ENCODE measurements at regions of chr20 and their contacts with region 1.

Region 1: DNA sequence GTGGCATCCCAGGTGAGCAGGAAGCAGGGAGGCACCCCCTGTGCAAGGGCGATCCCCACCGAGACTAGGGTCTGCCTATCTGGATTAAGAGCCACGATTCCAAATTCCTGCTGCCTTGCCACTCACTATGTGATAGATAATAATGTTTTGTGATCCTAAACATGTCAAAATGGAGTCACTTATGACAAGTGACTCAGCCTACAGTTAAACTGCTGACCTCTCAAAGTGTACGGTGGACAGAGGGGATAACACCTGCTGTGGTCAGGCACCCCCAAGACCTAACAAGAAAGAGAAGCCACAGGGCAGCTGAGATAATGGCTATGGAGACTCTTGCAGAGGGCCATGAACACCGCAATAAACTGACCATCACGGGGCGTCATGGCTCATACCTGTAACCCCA is 16.0 kb upstream of the SNTA1 start:
- DNase-seq: no peak
- H3K4me3 ChIP-seq: no peak overlapping the region
- H3K27ac ChIP-seq: no peak overlapping the region
- H3K4me1 ChIP-seq: no peaks in the 10 kb centered on the region
- H3K27me3 ChIP-seq: no peaks in the 10 kb centered on the region
- CTCF ChIP-seq: no peak
- POLR2A ChIP-seq: no peak

Region 2: DNA sequence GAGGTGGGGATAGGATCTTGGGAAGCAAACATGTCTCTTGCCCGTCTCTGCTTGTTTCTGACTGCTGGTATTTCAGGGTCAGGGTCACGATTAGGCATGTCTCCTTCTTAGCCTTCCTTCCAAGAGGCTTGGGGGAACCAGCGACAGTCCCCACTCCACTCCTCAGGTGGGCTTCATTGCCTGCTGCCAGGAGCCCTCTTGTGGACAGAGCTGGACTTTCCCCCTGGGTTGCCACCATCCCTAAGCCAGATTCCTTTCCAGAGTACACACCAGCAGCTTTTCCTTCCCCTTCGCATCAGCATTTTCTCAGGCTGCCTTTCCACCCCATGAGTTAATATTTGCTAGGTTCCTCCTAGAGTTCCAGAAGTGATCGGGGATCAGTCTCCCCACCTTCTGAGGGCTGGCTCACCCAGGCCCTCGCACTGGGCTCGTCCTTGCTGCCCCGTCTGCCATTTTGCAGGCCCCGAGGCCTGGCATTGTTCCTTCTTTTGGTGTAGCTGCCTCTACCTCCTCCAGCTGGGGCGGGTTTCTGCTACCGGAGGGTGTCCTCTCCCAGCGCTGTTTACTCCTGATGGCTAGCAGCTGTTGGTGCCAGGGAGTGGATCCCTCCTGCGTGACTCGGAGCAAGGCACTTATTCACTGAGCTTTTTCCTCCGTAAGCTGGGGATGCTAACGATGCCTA is 193.8 kb after region 1 on chr20:
- intact Hi-C with region 1: loop called (anchors 5 kb)
- DNase-seq: no peak
- H3K4me3 ChIP-seq: no peak overlapping the region
- H3K27ac ChIP-seq: peak overlapping the region; percentile 68 to 87
- H3K4me1 ChIP-seq: peaks cover 33% of the 10 kb centered on the region
- H3K27me3 ChIP-seq: no peaks in the 10 kb centered on the region
- CTCF ChIP-seq: peak; percentile 55 to 83 (median 76)
- POLR2A ChIP-seq: no peak

Region 3: GRCh38 chr20:33666293-33667244 is 207.0 kb after region 1 on chr20 and contains the start of gene ACTL10:
- intact Hi-C with region 1: loop called (anchors 5 kb)
- DNase-seq: peak; percentile 96
- H3K4me3 ChIP-seq: peak within 1 kb of the TSS; percentile 51 to 53
- H3K27ac ChIP-seq: peak within 1 kb of the TSS; percentile 90 to 91
- H3K4me1 ChIP-seq: peaks cover 7% of the 10 kb centered on the region
- H3K27me3 ChIP-seq: no peaks in the 10 kb centered on the region
- CTCF ChIP-seq: peak in 2 of 4 experiments; percentile 43 to 50
- POLR2A ChIP-seq: peak; percentile 96
- total RNA-seq, gene ACTL10: 7.9 to 8.5 TPM

Region 4: GRCh38 chr20:33908336-33908735 is 448.7 kb after region 1 on chr20:
- intact Hi-C with region 1: no loop called
- DNase-seq: no peak
- H3K4me3 ChIP-seq: no peak overlapping the region
- H3K27ac ChIP-seq: no peak overlapping the region
- H3K4me1 ChIP-seq: peaks cover 10% of the 10 kb centered on the region
- H3K27me3 ChIP-seq: no peaks in the 10 kb centered on the region
- CTCF ChIP-seq: no peak
- POLR2A ChIP-seq: no peak

Region 5: GRCh38 chr20:34111702-34112599 is 652.4 kb after region 1 on chr20 and contains the start of gene EIF2S2:
- intact Hi-C with region 1: no loop called
- DNase-seq: peak; percentile 94
- H3K4me3 ChIP-seq: peak within 1 kb of the TSS; percentile 74 to 78
- H3K27ac ChIP-seq: peak within 1 kb of the TSS; percentile 90 to 91
- H3K4me1 ChIP-seq: no peaks in the 10 kb centered on the region
- H3K27me3 ChIP-seq: no peaks in the 10 kb centered on the region
- CTCF ChIP-seq: peak in 3 of 4 experiments; percentile 8 to 39 (median 23)
- POLR2A ChIP-seq: peak; percentile 97
- total RNA-seq, gene EIF2S2: 32.7 to 41.0 TPM

Measured in prostate gland (tissue), 2 donors.